ENCODE measurements at regions of chr17 and their contacts with region 1.

Region 1: DNA sequence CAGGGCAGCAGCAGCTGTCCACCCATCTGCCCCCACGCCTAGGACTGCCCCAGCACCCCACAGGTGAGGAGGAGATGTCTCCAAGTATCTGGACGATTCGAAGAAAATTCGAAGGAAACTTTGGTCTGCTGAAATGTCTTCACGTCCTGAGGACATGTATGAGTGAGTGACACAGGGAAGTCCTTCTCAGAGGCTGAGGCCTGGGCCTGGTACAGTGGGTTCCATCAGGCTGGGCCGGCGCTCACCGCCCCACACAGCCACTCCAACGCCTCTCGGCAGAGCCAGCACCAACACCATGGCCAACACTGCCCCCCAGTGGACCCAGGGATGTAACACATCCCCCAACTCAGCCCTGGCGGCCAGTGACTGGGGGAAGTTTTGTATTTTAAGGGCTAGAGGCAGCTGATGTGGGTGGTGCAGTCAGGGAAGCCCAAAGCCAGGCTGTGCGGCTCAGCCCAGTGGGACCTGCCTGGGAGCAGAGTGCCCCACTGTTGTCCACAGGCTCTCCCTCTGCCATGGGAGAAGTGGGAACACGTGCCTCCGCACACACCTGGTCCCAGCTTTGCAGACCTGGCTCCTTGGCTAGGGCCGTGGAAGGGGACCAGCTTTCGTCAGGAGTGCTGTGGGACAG is 55.8 kb upstream of the FASN start:
- DNase-seq: peak; percentile 89
- H3K4me3 Mint-ChIP-seq: no peak overlapping the region
- H3K27ac Mint-ChIP-seq: peak overlapping the region; percentile 65
- H3K4me1 Mint-ChIP-seq: peaks cover 5% of the 10 kb centered on the region
- H3K27me3 Mint-ChIP-seq: no peaks in the 10 kb centered on the region

Region 2: GRCh38 chr17:82030470-82031302 is 123.2 kb before region 1 on chr17:
- CTCF ChIA-PET with region 1: interaction called, 16 read pairs
- DNase-seq: peak; percentile 90
- H3K4me3 Mint-ChIP-seq: peak overlapping the region; percentile 78
- H3K27ac Mint-ChIP-seq: peak overlapping the region; percentile 76
- H3K4me1 Mint-ChIP-seq: peaks cover 27% of the 10 kb centered on the region
- H3K27me3 Mint-ChIP-seq: peaks cover 14% of the 10 kb centered on the region

Region 3: GRCh38 chr17:82120148-82120547 is 33.7 kb before region 1 on chr17:
- CTCF ChIA-PET with region 1: interaction called, 17 read pairs
- DNase-seq: peak; percentile 57
- H3K4me3 Mint-ChIP-seq: no peak overlapping the region
- H3K27ac Mint-ChIP-seq: peak overlapping the region; percentile 81
- H3K4me1 Mint-ChIP-seq: peaks cover 47% of the 10 kb centered on the region
- H3K27me3 Mint-ChIP-seq: no peaks in the 10 kb centered on the region

Region 4: GRCh38 chr17:82230627-82231311 is 76.9 kb after region 1 on chr17:
- CTCF ChIA-PET with region 1: no interaction called
- DNase-seq: peak; percentile 79
- H3K4me3 Mint-ChIP-seq: peak overlapping the region; percentile 89
- H3K27ac Mint-ChIP-seq: peak overlapping the region; percentile 83
- H3K4me1 Mint-ChIP-seq: peaks cover 29% of the 10 kb centered on the region
- H3K27me3 Mint-ChIP-seq: peaks cover 5% of the 10 kb centered on the region